ENCODE measurements at regions of chr2 and their contacts with region 1.

Region 1: GRCh38 chr2:177724398-177725287 is 332.1 kb downstream of the AGPS start:
- DNase-seq: peak; percentile 68 to 84
- H3K4me3 ChIP-seq: no peak overlapping the region
- H3K4me1 ChIP-seq: peaks cover 32% of the 10 kb centered on the region
- H3K27me3 ChIP-seq: peaks cover 5% of the 10 kb centered on the region

Region 2: GRCh38 chr2:177405029-177405692 is 319.5 kb before region 1 on chr2:
- in situ Hi-C with region 1: no loop called
- DNase-seq: no peak
- H3K4me3 ChIP-seq: no peak overlapping the region
- H3K4me1 ChIP-seq: no peaks in the 10 kb centered on the region
- H3K27me3 ChIP-seq: no peaks in the 10 kb centered on the region

Region 3: DNA sequence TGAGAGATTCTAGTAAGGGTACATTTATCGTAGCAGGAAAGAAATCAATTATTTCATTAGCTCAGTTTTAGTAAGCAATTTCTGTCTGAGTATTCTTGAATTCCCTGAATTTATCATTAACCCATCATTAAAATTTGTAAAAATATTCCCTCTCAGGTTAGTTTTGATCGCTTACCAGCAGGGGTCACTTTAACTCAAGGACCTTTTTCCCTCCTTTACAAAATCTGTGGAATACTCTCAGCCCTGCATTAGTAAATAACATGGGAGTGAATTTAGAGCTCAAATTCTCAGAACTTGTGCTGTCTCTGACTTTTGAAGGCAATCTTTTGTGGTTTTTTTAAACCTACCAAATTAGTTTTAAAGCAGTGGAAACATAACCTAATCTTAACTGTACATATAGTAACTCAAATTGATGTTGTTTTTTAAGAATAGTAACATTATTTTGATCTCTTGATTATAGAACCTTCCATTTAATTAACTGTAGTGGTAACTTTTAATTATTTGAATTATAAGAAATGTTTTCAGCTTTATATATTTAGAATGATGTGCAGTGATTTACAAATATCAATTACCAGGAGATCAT is 234.8 kb before region 1 on chr2:
- in situ Hi-C with region 1: loop called (anchors 5 kb)
- DNase-seq: peak; percentile 46 to 72
- H3K4me3 ChIP-seq: no peak overlapping the region
- H3K4me1 ChIP-seq: peaks cover 11% of the 10 kb centered on the region
- H3K27me3 ChIP-seq: no peaks in the 10 kb centered on the region

Region 4: GRCh38 chr2:177604271-177605065 is 120.2 kb before region 1 on chr2:
- in situ Hi-C with region 1: loop called (anchors 10 kb)
- DNase-seq: peak; percentile 76 to 92
- H3K4me3 ChIP-seq: peak overlapping the region; percentile 35
- H3K4me1 ChIP-seq: peaks cover 27% of the 10 kb centered on the region
- H3K27me3 ChIP-seq: no peaks in the 10 kb centered on the region

Measured in HAP-1 (cell line).